ENCODE measurements at regions of chr2 and their contacts with region 1.

Region 1: GRCh38 chr2:105775809-105776559 is 31.3 kb downstream of the NCK2 start:
- DNase-seq: peak in 5 of 9 donors; percentile 36 to 48 (median 41)
- ATAC-seq: peak; percentile 71
- H3K4me3 ChIP-seq: peak overlapping the region; percentile 53
- H3K4me3 Mint-ChIP-seq: peak overlapping the region; percentile 71 to 93 (median 84)
- H3K27ac ChIP-seq: peak overlapping the region; percentile 85
- H3K27ac Mint-ChIP-seq: peak overlapping the region; percentile 83 to 98 (median 92)
- H3K4me1 ChIP-seq: peaks cover 87 to 88% of the 10 kb centered on the region in 2 donors
- H3K4me1 Mint-ChIP-seq: peaks cover 79 to 97% (median 95%) of the 10 kb centered on the region in 7 donors
- H3K27me3 ChIP-seq: no peaks in the 10 kb centered on the region
- H3K27me3 Mint-ChIP-seq: no peaks in the 10 kb centered on the region

Region 2: DNA sequence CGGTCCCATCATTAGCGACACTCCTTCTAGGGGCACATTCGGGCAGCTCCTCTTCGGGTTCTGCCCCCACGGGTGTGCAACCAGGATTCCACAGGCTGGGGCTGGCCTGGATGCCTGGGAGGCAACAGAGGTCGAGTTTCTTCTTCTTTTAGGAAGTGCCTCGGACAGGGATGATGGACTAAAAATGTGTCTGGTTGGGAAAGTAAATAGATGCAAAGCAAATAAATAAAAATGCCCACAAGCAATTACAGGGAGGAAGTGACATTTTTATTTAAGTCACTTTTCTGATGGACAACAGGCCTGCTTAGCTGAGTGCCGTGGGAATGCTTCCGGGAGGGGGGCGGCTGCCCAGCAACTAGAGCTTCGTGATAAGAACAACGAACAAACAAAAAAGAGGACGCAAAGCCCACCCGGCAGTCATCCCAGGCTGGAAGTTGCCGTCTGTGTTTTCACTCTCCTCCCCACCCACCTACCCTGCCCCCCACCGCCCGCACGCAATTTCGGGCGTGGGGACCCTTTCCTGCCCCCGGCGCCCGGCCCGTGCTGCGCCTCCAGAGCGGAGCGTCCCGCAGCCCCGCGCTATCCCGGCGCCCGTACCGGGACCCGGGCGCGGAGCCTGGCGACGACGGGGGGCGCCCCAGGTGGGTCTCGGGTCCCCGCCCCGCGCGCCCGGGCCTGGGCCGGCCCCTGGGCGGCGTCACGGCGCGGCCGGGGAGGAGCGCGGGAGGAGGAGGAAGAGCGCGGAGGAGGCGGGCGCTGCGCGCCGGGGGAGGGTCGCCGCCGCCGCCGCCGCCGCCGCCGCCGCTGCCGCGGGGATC is 31.7 kb before region 1 on chr2:
- CTCF ChIA-PET with region 1: interaction called, 4 read pairs
- POLR2A ChIA-PET with region 1: interaction called, 9 read pairs
- intact Hi-C with region 1: loop called (anchors 1 to 2 kb)
- DNase-seq: peak; percentile 57 to 79 (median 69)
- ATAC-seq: peak; percentile 87
- H3K4me3 ChIP-seq: peak overlapping the region; percentile 24
- H3K4me3 Mint-ChIP-seq: peak overlapping the region; percentile 76 to 96 (median 90)
- H3K27ac ChIP-seq: peak overlapping the region; percentile 80
- H3K27ac Mint-ChIP-seq: peak overlapping the region; percentile 90 to 96 (median 95)
- H3K4me1 ChIP-seq: peaks cover 48 to 54% of the 10 kb centered on the region in 2 donors
- H3K4me1 Mint-ChIP-seq: peaks cover 49 to 82% (median 77%) of the 10 kb centered on the region in 7 donors
- H3K27me3 ChIP-seq: no peaks in the 10 kb centered on the region
- H3K27me3 Mint-ChIP-seq: no peaks in the 10 kb centered on the region

Region 3: GRCh38 chr2:105761931-105762515 is 14.0 kb before region 1 on chr2:
- CTCF ChIA-PET with region 1: interaction called, 4 read pairs
- POLR2A ChIA-PET with region 1: interaction called, 41 read pairs
- intact Hi-C with region 1: loop called in 1 of 2 experiments (anchors 2 kb)
- DNase-seq: no peak
- ATAC-seq: no peak
- H3K4me3 ChIP-seq: peak overlapping the region; percentile 31
- H3K4me3 Mint-ChIP-seq: peak overlapping the region; percentile 15 to 63 (median 50)
- H3K27ac ChIP-seq: peak overlapping the region; percentile 58
- H3K27ac Mint-ChIP-seq: peak overlapping the region; percentile 55 to 93 (median 92)
- H3K4me1 ChIP-seq: peaks cover 84 to 95% of the 10 kb centered on the region in 2 donors
- H3K4me1 Mint-ChIP-seq: peaks cover 73 to 100% (median 91%) of the 10 kb centered on the region in 7 donors
- H3K27me3 ChIP-seq: no peaks in the 10 kb centered on the region
- H3K27me3 Mint-ChIP-seq: no peaks in the 10 kb centered on the region

Region 4: DNA sequence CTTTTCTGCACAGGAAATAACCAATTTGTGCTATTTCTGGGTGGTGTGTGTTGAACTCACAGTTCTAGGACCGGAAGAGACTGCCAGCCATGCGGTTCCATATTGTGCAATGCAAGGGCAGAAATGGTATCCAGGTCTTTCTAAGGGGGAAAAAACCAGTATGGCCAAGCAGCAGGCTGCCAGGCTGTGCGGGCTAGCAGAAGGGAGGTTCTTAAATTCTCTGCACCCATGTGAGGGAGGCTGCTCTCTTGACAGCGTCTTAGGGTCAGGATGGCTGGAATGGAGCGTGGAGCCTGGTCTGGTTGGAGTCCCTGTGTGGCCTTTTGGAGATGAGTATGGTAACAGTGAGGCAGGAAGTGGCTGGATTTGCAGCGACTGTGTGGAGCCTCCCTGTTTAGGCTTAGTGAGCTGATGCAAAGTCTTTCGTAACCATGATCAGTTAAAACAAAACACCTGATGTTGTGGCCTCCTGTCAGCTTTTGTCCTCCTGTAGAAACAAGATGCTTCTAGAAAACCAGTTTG is 21.4 kb after region 1 on chr2:
- CTCF ChIA-PET with region 1: interaction called, 4 read pairs
- POLR2A ChIA-PET with region 1: interaction called, 18 read pairs
- intact Hi-C with region 1: loop called in 1 of 2 experiments (anchors 2 kb)
- DNase-seq: peak in 6 of 9 donors; percentile 37 to 58 (median 48)
- ATAC-seq: peak; percentile 33
- H3K4me3 ChIP-seq: peak overlapping the region; percentile 34
- H3K4me3 Mint-ChIP-seq: peak overlapping the region; percentile 70 to 92 (median 78)
- H3K27ac ChIP-seq: peak overlapping the region; percentile 74
- H3K27ac Mint-ChIP-seq: peak overlapping the region; percentile 92 to 100 (median 99)
- H3K4me1 ChIP-seq: peaks cover 92 to 93% of the 10 kb centered on the region in 2 donors
- H3K4me1 Mint-ChIP-seq: peaks cover 74 to 100% (median 94%) of the 10 kb centered on the region in 7 donors
- H3K27me3 ChIP-seq: no peaks in the 10 kb centered on the region
- H3K27me3 Mint-ChIP-seq: no peaks in the 10 kb centered on the region

Region 5: DNA sequence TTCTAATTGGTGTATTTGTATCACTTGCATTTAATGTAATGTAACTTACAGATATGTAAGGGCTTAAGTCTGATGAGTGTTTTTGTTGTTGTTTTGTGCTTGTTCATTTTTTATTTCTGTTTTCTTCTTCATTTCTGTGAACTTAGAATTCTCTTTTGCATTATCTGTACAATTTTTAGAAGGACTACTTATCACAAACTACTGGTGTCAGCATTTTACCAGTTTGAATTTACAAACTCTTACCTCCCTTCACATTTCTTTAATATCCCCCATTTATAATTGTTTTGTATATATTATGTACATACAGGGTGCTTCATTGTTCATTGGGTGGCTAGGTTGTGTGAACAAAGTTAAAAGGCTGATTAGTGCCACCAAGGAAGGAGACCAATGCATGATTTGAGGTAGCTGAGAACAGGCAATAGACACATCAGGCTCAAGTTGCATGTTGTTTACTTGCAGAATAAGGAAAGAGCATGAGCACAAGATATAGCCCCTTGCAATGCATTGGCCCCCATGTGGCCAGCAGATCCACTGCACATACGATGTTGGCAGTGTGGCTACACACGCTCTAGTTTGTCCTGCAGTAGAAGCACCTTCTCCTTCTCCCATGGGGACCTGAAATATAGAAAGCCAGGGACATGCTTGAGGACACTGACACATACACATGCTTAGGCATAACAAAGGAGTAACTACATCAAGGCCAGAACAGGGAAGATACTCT is 909.4 kb after region 1 on chr2:
- CTCF ChIA-PET with region 1: no interaction called
- POLR2A ChIA-PET with region 1: no interaction called
- intact Hi-C with region 1: no loop called
- DNase-seq: no peak
- ATAC-seq: no peak
- H3K4me3 ChIP-seq: no peak overlapping the region
- H3K4me3 Mint-ChIP-seq: no peak overlapping the region
- H3K27ac ChIP-seq: no peak overlapping the region
- H3K27ac Mint-ChIP-seq: no peak overlapping the region
- H3K4me1 ChIP-seq: no peaks in the 10 kb centered on the region
- H3K4me1 Mint-ChIP-seq: no peaks in the 10 kb centered on the region
- H3K27me3 ChIP-seq: no peaks in the 10 kb centered on the region
- H3K27me3 Mint-ChIP-seq: peaks cover 0 to 37% (median 20%) of the 10 kb centered on the region in 5 donors